GM10248 (cell line): ENCODE measurements at regions of chr17 and their contacts with region 1.

Region 1: GRCh38 chr17:37373530-37374159 is 2.1 kb upstream of the C17orf78 start:
- DNase-seq: peak; percentile 83
- CTCF ChIP-seq: peak; percentile 99

Region 2: GRCh38 chr17:36629252-36629847 is 744.3 kb before region 1 on chr17:
- CTCF ChIA-PET with region 1: interaction called, 28 read pairs
- POLR2A ChIA-PET with region 1: no interaction called
- DNase-seq: peak; percentile 87
- CTCF ChIP-seq: peak; percentile 99

Region 3: DNA sequence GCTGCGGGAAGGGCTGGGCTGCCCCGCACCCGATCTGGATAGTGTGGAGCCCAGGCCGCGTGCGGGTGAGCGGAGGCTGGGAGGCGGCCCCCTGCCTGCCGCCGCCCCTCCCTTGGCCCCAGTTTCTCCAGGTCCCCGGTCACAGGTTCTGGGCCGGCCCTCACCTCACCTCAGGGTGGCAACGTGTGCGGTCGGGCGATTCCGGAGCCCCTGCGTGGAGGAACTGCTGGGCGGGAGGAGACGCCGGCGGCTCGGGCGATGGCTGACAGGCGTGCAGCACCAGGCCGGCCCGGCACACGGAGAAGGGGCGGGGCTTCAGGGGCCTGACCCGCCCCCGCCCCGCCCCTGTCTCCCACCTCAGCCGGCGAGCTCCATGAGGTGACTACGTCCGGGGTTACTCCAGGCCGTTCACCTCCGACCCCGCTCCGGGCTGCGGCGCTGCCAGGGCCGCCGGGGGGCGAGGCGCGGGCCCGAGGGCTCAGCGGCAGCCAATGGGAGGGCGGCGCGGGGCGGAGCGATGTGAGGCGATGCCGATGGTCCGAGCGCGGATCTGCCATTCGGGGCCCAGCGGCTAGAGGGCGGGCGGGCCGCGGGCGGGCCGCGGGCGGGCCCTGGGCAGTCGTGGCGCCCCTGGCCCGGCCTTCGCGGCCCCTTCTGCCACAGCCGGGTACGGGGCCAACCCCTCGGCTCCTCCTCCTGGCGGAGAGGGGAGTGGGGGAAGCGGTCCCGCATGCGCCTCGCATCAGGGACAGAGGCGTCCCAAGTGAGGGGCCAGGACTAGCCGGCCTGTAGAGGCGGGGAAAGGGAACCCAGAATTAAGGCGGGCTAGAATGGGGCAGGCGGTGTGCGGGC is 14.6 kb before region 1 on chr17:
- CTCF ChIA-PET with region 1: interaction called, 27 read pairs
- POLR2A ChIA-PET with region 1: no interaction called
- DNase-seq: peak; percentile 99
- CTCF ChIP-seq: no peak

Region 4: GRCh38 chr17:37392024-37392590 is 18.5 kb after region 1 on chr17:
- CTCF ChIA-PET with region 1: interaction called, 143 read pairs
- POLR2A ChIA-PET with region 1: interaction called, 5 read pairs
- DNase-seq: peak; percentile 62
- CTCF ChIP-seq: no peak

Region 5: DNA sequence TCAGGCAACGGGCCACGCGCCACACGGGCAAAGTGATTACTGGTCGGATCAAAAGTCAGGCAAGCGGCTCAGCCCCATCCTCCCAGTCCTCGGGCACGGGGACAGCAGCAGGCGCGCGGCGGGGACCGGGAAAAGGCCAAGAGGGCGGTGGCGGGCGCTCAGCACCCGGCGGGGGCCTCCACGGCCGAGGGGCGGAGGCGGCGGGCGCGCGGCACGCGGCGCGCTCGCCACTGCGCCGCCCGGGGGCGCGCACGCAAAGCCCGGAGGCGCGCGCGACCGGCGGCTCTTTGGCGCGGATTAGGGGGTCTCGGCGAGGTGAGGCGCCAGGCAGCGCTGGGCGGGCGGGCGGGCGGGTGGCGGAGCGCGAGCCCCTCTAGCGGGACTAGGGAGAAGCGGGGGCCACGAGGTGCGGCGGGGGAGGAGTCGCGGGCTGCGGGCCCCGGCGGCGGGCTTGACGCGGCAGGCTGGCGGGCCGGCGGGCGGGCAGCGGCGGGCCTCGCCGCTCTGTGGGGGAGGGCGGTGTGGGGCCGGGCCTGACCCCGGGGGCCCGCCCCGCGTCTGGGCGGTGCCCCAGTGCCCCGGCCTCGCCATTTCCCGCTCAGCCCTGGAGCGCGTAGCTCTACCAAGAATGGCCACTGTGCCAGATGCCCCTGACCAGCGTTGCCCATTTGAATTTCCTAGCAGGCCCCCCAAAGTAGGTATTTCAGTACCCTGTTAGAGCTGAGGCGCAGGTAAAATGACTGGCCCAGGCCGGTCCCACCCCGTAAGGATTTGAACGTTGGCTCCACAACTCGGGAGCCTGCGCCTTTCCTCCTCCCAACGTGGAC is 33.2 kb after region 1 on chr17 and contains the starts of genes ACACA and TADA2A:
- CTCF ChIA-PET with region 1: interaction called, 86 read pairs
- POLR2A ChIA-PET with region 1: no interaction called
- DNase-seq: peak; percentile 95
- CTCF ChIP-seq: no peak

Region 6: GRCh38 chr17:37438141-37438540 is 64.5 kb after region 1 on chr17:
- CTCF ChIA-PET with region 1: interaction called, 10 read pairs
- POLR2A ChIA-PET with region 1: no interaction called
- DNase-seq: no peak
- CTCF ChIP-seq: no peak

Region 7: DNA sequence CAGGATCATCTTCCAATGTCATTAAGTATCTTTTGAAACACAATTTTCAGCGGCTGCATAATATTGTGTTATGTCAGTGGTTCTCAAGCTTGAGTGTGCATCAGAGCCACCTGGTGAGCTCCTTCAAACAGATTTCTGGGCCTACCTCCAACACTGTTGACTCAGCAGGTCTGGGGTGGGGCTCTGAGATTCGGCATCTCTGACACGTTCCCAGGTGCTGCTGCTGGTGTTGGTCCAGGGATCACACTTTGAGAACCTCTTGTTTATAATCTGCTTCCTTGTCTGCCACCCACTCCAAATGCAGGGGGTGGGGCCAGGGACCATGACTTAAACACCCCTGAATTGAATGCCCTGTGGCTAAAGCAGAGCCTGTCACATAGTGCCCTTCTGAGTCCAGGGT is 445.0 kb after region 1 on chr17:
- CTCF ChIA-PET with region 1: interaction called, 13 read pairs
- POLR2A ChIA-PET with region 1: no interaction called
- DNase-seq: no peak
- CTCF ChIP-seq: no peak